ENCODE measurements at regions of chr15 and their contacts with region 1.

Region 1: GRCh38 chr15:42072141-42072685 is 22.1 kb downstream of the PLA2G4D start:
- DNase-seq: no peak
- H3K4me3 Mint-ChIP-seq: no peak overlapping the region
- H3K27ac Mint-ChIP-seq: no peak overlapping the region
- H3K4me1 Mint-ChIP-seq: no peaks in the 10 kb centered on the region
- H3K27me3 Mint-ChIP-seq: peaks cover 10% of the 10 kb centered on the region

Region 2: GRCh38 chr15:42084460-42085235 is 12.4 kb after region 1 on chr15:
- CTCF ChIA-PET with region 1: interaction called, 29 read pairs
- POLR2A ChIA-PET with region 1: no interaction called
- DNase-seq: peak; percentile 39
- H3K4me3 Mint-ChIP-seq: no peak overlapping the region
- H3K27ac Mint-ChIP-seq: no peak overlapping the region
- H3K4me1 Mint-ChIP-seq: peaks cover 9% of the 10 kb centered on the region
- H3K27me3 Mint-ChIP-seq: peaks cover 6% of the 10 kb centered on the region

Measured in activated CD4-positive, alpha-beta T cell treated with anti-CD3 and anti-CD28 coated beads, Interleukin-2, amount 10 ng/mL, durations not matched to agents 7 days and 5 days (primary cell).